ENCODE measurements at regions of chr2 and their contacts with region 1.

Region 1: GRCh38 chr2:206556357-206556949 is 85.8 kb upstream of the FAM237A start:
- DNase-seq: no peak
- H3K4me3 Mint-ChIP-seq: no peak overlapping the region
- H3K27ac Mint-ChIP-seq: no peak overlapping the region
- H3K4me1 Mint-ChIP-seq: peaks cover 11% of the 10 kb centered on the region
- H3K27me3 Mint-ChIP-seq: peaks cover 26% of the 10 kb centered on the region

Region 2: GRCh38 chr2:206518997-206519396 is 37.5 kb before region 1 on chr2:
- intact Hi-C with region 1: loop called (anchors 5 kb)
- DNase-seq: no peak
- H3K4me3 Mint-ChIP-seq: no peak overlapping the region
- H3K27ac Mint-ChIP-seq: no peak overlapping the region
- H3K4me1 Mint-ChIP-seq: peaks cover 10% of the 10 kb centered on the region
- H3K27me3 Mint-ChIP-seq: peaks cover 15% of the 10 kb centered on the region

Region 3: GRCh38 chr2:206585335-206585734 is 28.9 kb after region 1 on chr2:
- intact Hi-C with region 1: no loop called
- DNase-seq: no peak
- H3K4me3 Mint-ChIP-seq: no peak overlapping the region
- H3K27ac Mint-ChIP-seq: no peak overlapping the region
- H3K4me1 Mint-ChIP-seq: no peaks in the 10 kb centered on the region
- H3K27me3 Mint-ChIP-seq: no peaks in the 10 kb centered on the region

Region 4: DNA sequence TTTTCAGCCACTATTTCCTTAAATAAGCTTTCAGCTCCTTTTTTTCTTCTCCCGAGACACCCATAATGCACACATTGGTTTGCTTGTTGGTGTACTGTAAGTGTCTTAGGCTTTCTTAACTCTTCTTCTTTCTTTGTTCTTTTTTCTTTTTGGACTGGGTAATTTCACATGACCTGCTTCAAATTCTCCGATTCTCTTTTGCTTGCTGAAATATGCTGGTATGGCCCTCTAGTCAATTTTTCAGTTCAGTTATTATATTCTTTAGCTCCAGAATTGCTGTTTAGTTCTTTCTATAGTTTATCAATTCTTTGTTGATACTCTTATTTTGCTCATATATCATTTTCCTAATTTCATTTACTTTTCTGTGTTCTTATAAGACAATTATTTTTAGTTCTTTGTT is 224.2 kb after region 1 on chr2:
- intact Hi-C with region 1: loop called (anchors 1 kb)
- DNase-seq: no peak
- H3K4me3 Mint-ChIP-seq: no peak overlapping the region
- H3K27ac Mint-ChIP-seq: no peak overlapping the region
- H3K4me1 Mint-ChIP-seq: no peaks in the 10 kb centered on the region
- H3K27me3 Mint-ChIP-seq: no peaks in the 10 kb centered on the region

Measured in activated T-helper 1 cell treated with anti-CD3 and anti-CD28 coated beads, Interleukin-12 subunit alpha, Interleukin-12 subunit beta, Interleukin-2, Interleukin-4 antibody, amounts not matched to agents 30 ng/mL and 10 ng/mL and 1 ng/mL, durations not matched to agents 14 hours and 24 hours and 36 hours (primary cell).